ENCODE measurements at regions of chr7 and their contacts with region 1.

Region 1: DNA sequence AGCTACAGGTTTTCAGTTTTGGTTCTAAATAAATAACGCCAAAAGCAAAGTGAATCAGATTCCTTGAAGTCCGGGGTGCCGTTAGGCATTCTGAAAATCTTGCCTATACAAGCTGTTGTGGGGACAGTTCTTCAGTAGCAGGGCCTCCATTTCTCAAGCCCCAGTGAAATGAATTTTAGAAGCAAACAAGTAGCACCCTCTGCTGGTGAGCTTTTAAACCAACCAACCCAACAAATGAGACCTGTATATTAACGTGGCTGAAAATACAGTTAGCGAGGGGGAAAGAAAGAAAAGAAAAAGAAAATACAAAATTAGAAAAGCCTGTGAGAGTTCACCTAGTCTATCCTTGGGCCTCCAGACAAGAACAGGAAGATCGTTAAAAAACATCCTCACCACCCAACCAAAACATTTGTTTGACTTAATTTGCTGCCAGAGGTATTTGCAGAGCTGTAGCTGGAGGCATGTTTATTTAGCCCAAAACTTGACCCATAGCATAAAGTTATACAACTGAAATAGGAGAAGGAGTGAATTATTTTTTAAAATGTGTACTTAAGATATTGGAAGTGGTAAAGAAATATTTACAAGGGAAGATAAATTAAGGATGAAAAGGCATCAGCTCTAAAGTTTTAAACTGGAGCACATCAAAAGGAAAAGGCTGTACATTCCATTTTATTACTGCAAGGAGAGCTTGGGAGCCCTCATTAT is 98.9 kb downstream of the DYNC1I1 start:
- DNase-seq: peak in 1 of 2 donors; percentile 38
- ATAC-seq: peak in 5 of 8 donors; percentile 57 to 76 (median 68)
- H3K4me3 ChIP-seq: no peak overlapping the region
- H3K27ac ChIP-seq: no peak overlapping the region
- H3K4me1 ChIP-seq: peaks cover 0 to 20% (median 14%) of the 10 kb centered on the region in 9 donors
- H3K27me3 ChIP-seq: no peaks in the 10 kb centered on the region
- CTCF ChIP-seq: peak in 8 of 9 donors; percentile 44 to 75 (median 64)

Region 2: GRCh38 chr7:95511716-95512260 is 359.4 kb before region 1 on chr7:
- intact Hi-C with region 1: loop called in 1 of 10 experiments (anchors 10 kb)
- DNase-seq: peak in 1 of 2 donors; percentile 71
- ATAC-seq: peak; percentile 72 to 92 (median 89)
- H3K4me3 ChIP-seq: no peak overlapping the region
- H3K27ac ChIP-seq: no peak overlapping the region
- H3K4me1 ChIP-seq: peaks cover 0 to 4% (median 0%) of the 10 kb centered on the region in 9 donors
- H3K27me3 ChIP-seq: peaks cover 0 to 3% (median 0%) of the 10 kb centered on the region in 7 donors
- CTCF ChIP-seq: peak; percentile 88 to 95 (median 92)

Measured in heart right ventricle (tissue), 16 donors.